ENCODE measurements at regions of chr2 and their contacts with region 1.

Region 1: GRCh38 chr2:216006164-216006663 is 7.1 kb downstream of the MREG start:
- DNase-seq: peak; percentile 76
- H3K4me3 Mint-ChIP-seq: peak overlapping the region; percentile 44
- H3K27ac Mint-ChIP-seq: peak overlapping the region; percentile 87
- H3K4me1 Mint-ChIP-seq: peaks cover 43% of the 10 kb centered on the region
- H3K27me3 Mint-ChIP-seq: no peaks in the 10 kb centered on the region

Region 2: DNA sequence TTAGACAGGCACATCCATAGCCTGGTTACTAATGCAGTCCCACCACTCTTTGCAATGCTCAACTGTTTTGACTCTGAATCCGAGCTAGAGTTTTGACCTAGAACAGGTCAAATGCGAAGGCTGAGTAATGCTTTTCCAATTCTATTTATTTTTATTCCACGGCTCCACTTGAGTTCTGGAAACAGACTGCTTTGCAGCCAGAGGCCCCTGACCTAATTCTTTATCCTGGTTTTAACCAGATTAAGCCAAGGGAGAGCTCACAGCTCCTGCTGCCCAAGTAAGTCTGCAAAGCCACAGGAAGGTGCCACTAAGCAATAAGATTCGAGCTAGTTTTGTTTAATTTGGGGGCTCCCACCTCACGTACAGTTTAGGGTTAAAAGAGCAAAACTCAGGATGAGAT is 44.2 kb before region 1 on chr2:
- CTCF ChIA-PET with region 1: no interaction called
- POLR2A ChIA-PET with region 1: no interaction called
- intact Hi-C with region 1: no loop called
- DNase-seq: no peak
- H3K4me3 Mint-ChIP-seq: no peak overlapping the region
- H3K27ac Mint-ChIP-seq: no peak overlapping the region
- H3K4me1 Mint-ChIP-seq: no peaks in the 10 kb centered on the region
- H3K27me3 Mint-ChIP-seq: no peaks in the 10 kb centered on the region

Region 3: DNA sequence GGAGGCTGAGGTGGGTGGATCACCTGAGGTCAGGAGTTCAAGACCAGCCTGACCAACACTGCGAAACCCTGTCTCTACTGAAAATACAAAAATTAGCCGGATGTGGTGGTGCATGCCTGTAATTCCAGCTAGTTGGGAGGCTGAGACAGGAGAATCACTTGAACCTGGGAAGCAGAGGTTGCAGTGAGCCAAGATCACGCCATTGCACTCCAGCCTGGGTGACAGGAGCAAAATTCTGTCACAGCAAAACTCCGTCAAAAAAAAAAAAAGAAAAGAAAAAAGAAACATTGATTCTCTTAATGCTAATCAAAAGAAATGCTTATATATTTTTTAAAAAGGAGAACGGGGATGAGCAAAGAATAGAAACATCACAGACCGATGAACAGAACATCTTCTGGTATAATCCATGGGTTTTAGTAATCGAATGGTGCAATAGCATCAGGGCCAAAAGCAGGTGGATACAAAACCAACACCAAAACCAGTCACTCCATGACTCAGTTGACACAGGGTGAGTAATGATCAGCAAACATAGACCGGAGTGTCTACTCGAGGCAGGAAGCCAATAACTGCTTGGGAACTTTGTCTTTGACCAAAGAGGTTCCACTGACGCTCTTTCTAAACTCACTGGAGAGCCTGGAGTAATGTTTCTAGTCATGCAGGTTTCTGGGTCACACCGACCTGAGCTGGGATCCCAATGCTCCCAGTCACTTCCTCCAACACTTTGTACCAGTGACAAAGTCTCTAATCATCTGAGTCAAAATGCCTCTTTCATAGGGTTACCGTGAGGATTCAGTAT is 23.9 kb before region 1 on chr2:
- CTCF ChIA-PET with region 1: interaction called, 3 read pairs
- POLR2A ChIA-PET with region 1: interaction called, 3 read pairs
- intact Hi-C with region 1: loop called (anchors 1 kb)
- DNase-seq: peak; percentile 69
- H3K4me3 Mint-ChIP-seq: no peak overlapping the region
- H3K27ac Mint-ChIP-seq: no peak overlapping the region
- H3K4me1 Mint-ChIP-seq: peaks cover 36% of the 10 kb centered on the region
- H3K27me3 Mint-ChIP-seq: no peaks in the 10 kb centered on the region

Region 4: GRCh38 chr2:216023055-216023648 is 16.9 kb after region 1 on chr2:
- CTCF ChIA-PET with region 1: interaction called, 31 read pairs
- POLR2A ChIA-PET with region 1: no interaction called
- intact Hi-C with region 1: no loop called
- DNase-seq: peak; percentile 62
- H3K4me3 Mint-ChIP-seq: no peak overlapping the region
- H3K27ac Mint-ChIP-seq: no peak overlapping the region
- H3K4me1 Mint-ChIP-seq: peaks cover 7% of the 10 kb centered on the region
- H3K27me3 Mint-ChIP-seq: no peaks in the 10 kb centered on the region